Prostate gland (tissue), 2 donors: ENCODE measurements at regions of chr9 and their contacts with region 1.

Region 1: GRCh38 chr9:36166101-36166927 is 2.9 kb upstream of the CCIN start:
- DNase-seq: peak; percentile 76
- H3K4me3 ChIP-seq: peak overlapping the region; percentile 34 to 40
- H3K27ac ChIP-seq: peak overlapping the region; percentile 61 to 68
- H3K4me1 ChIP-seq: peaks cover 3% of the 10 kb centered on the region
- H3K27me3 ChIP-seq: no peaks in the 10 kb centered on the region
- CTCF ChIP-seq: peak; percentile 89 to 94 (median 93)
- POLR2A ChIP-seq: no peak

Region 2: GRCh38 chr9:35945341-35946018 is 220.8 kb before region 1 on chr9:
- intact Hi-C with region 1: loop called (anchors 10 kb)
- DNase-seq: peak; percentile 43
- H3K4me3 ChIP-seq: no peak overlapping the region
- H3K27ac ChIP-seq: no peak overlapping the region
- H3K4me1 ChIP-seq: no peaks in the 10 kb centered on the region
- H3K27me3 ChIP-seq: no peaks in the 10 kb centered on the region
- CTCF ChIP-seq: peak; percentile 27 to 67 (median 65)
- POLR2A ChIP-seq: no peak

Region 3: GRCh38 chr9:36102742-36103495 is 63.4 kb before region 1 on chr9:
- intact Hi-C with region 1: loop called (anchors 2 kb)
- DNase-seq: peak; percentile 66
- H3K4me3 ChIP-seq: no peak overlapping the region
- H3K27ac ChIP-seq: peak overlapping the region; percentile 52 to 76
- H3K4me1 ChIP-seq: peaks cover 8% of the 10 kb centered on the region
- H3K27me3 ChIP-seq: no peaks in the 10 kb centered on the region
- CTCF ChIP-seq: peak in 3 of 4 experiments; percentile 69 to 78 (median 71)
- POLR2A ChIP-seq: no peak

Region 4: GRCh38 chr9:36136272-36136893 is 29.9 kb before region 1 on chr9 and contains the start of gene GLIPR2:
- intact Hi-C with region 1: loop called (anchors 2 kb)
- DNase-seq: peak; percentile 77
- H3K4me3 ChIP-seq: peak within 1 kb of the TSS; percentile 63 to 91
- H3K27ac ChIP-seq: peak within 1 kb of the TSS; percentile 78 to 83
- H3K4me1 ChIP-seq: no peaks in the 10 kb centered on the region
- H3K27me3 ChIP-seq: no peaks in the 10 kb centered on the region
- CTCF ChIP-seq: peak in 3 of 4 experiments; percentile 17 to 41 (median 29)
- POLR2A ChIP-seq: peak; percentile 80
- total RNA-seq, gene GLIPR2: 21.6 to 36.5 TPM

Region 5: DNA sequence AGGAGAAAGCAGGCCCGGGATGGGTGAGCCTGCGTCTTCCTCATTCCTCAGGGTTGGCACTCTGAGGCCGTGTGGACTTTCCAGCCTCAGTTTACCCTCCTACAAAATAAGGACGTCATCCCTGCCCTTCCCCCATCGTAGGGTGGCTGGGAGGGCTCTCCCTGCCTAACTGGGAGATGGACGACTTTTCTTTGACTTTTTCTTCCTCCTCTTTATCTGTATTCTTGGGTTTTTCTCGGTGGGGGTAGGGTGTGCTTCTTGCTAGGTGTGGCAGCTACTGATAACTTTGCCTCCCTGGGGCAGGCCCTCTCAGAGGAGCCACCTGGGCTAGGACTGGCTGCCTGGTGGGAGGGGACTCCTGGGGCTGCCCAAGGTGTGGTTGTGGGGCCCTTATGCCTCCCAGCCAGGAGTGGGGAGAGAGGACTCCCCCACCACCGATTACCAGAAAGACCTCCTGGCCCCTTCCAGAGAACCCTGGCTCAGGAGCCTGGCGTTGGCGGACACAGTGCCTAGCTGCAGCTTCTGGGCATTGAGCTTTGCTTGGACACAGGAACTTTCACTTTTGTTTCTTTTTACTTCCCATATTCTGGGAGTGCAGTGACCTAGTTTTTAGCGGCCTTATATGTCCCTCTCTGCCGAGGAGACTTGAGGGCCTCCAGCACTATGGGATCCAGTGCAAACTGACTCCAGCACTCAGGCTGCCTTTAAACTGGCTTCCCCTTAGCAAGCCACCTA is 23.6 kb before region 1 on chr9:
- intact Hi-C with region 1: loop called (anchors 2 kb)
- DNase-seq: no peak
- H3K4me3 ChIP-seq: no peak overlapping the region
- H3K27ac ChIP-seq: peak overlapping the region; percentile 74 to 80
- H3K4me1 ChIP-seq: peaks cover 5% of the 10 kb centered on the region
- H3K27me3 ChIP-seq: no peaks in the 10 kb centered on the region
- CTCF ChIP-seq: no peak
- POLR2A ChIP-seq: no peak